ENCODE measurements at regions of chr3 and their contacts with region 1.

Region 1: DNA sequence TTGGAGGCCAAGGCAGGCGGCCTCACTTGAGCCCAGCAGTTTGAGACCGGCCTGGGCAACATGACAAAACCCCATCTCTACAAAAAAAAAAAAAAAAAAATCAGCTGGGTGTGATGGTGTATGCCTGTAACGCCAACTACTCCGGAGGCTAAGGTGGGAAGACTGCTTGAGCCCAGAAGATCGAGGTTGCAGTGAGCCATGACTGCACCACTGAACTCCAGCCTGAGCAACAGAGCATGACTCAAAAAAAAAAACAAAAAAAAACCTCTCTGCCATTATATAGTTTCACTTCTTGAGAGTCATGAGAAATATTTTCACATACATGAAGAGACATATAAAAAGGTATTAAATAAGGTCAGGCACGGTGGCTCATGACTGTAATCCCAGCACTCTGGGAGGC is 45.9 kb upstream of the CP start:
- DNase-seq: no peak
- ATAC-seq: no peak
- H3K4me3 ChIP-seq: no peak overlapping the region
- H3K27ac ChIP-seq: no peak overlapping the region
- H3K4me1 ChIP-seq: peaks cover 0 to 1% (median 0%) of the 10 kb centered on the region in 9 donors
- H3K27me3 ChIP-seq: no peaks in the 10 kb centered on the region
- CTCF ChIP-seq: no peak

Region 2: GRCh38 chr3:149120051-149120972 is 147.3 kb before region 1 on chr3:
- intact Hi-C with region 1: loop called in 7 of 10 experiments (anchors 2 to 5 kb)
- DNase-seq: peak in 1 of 2 donors; percentile 29
- ATAC-seq: peak in 7 of 8 donors; percentile 36 to 85 (median 76)
- H3K4me3 ChIP-seq: no peak overlapping the region
- H3K27ac ChIP-seq: no peak overlapping the region
- H3K4me1 ChIP-seq: peaks cover 0 to 5% (median 0%) of the 10 kb centered on the region in 9 donors
- H3K27me3 ChIP-seq: no peaks in the 10 kb centered on the region
- CTCF ChIP-seq: peak; percentile 17 to 80 (median 67)

Measured in heart right ventricle (tissue), 16 donors.